A673 (cell line): ENCODE measurements at regions of chr3 and their contacts with region 1.

Region 1: DNA sequence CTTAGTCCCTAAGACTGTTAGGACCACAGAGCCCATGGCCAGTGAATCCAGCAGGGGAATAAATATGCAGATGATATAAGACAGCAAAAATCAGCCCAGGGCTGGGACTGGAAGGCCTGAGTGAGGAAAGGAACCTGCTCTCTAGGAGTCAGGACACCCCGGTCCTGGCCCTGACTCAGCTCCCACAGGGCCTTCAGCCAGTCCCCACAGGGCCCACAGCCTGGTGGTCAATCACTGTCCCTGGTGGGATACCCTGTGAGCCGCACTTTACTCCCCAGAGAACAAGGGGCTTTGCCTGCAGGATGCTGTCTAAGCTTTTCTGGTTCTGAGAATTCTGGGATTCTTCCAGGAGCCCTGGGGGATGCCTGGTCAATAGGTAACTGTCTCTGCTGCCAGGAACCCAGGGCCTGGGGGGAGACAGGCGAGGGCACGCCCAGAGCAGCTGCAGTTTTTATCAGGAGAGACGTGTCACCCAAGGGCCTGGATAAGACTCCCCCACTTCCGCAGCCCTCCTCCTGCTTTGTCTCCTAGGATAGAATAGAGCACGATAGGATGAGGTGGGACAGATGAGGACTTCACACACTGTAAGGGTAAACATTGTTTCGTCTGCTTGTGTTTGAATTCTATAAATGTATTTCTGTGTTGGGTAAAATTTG is 49.5 kb upstream of the MCF2L2 start:
- DNase-seq: no peak
- H3K4me3 ChIP-seq: no peak overlapping the region
- H3K27ac ChIP-seq: no peak overlapping the region
- H3K4me1 ChIP-seq: no peaks in the 10 kb centered on the region
- H3K27me3 ChIP-seq: peaks cover 5% of the 10 kb centered on the region
- CTCF ChIP-seq: no peak

Region 2: DNA sequence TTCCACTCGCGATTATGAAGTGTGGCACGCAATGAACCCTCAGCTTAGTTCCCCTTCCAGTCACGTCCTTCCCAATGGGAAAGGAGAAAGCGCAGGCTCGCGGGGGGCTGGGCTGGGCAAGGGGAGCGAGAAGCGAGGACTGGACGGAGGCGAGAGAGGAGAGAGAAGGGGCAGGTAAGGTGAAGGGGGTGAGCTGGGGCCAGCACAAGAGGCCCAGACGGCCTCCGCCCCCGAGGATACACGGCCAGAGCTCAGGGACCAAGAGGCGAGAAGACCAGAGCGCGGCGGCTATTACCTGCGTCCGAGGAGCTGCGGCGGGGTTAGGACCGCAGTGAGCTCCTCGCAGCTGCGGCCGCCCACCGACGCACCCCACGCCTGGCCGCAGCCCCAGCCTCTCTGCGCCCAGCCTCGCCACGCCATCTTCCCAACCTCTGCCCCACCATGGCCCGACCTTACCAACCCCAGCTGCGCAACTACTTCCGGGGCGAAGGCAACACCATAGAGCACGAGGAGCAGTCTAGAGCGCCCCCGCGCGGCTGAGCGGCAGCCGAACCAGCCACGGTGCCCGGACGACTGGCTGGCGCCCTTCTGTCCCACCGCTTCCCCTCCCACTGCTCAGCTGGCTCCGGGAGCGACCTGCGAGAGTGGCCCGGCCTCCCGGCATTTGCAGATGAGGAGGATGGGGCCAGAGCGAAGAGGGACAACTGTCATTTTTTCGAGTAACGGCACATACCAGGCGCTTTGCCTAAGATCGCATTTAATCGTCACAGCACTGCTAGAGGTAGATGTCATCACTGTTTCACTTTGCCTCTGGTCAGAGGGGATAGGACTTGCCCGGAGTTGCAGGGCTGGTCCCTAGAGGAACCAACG is 406.7 kb after region 1 on chr3 and contains the start of gene PARL:
- CTCF ChIA-PET with region 1: no interaction called
- POLR2A ChIA-PET with region 1: no interaction called
- intact Hi-C with region 1: loop called (anchors 5 kb)
- DNase-seq: peak; percentile 94
- H3K4me3 ChIP-seq: peak within 1 kb of the TSS; percentile 78
- H3K27ac ChIP-seq: peak within 1 kb of the TSS; percentile 70
- H3K4me1 ChIP-seq: peaks cover 12% of the 10 kb centered on the region
- H3K27me3 ChIP-seq: no peaks in the 10 kb centered on the region
- CTCF ChIP-seq: peak; percentile 99
- total RNA-seq, gene PARL: 73.7 and 79.8 TPM in 2 replicates